Dendritic cell treated with granulocyte-macrophage colony-stimulating factor and Interleukin-4, amounts not matched to agents 40 ng/mL and 50 ng/mL, for 4 days (primary cell): ENCODE measurements at regions of chr22 and their contacts with region 1.

Region 1: DNA sequence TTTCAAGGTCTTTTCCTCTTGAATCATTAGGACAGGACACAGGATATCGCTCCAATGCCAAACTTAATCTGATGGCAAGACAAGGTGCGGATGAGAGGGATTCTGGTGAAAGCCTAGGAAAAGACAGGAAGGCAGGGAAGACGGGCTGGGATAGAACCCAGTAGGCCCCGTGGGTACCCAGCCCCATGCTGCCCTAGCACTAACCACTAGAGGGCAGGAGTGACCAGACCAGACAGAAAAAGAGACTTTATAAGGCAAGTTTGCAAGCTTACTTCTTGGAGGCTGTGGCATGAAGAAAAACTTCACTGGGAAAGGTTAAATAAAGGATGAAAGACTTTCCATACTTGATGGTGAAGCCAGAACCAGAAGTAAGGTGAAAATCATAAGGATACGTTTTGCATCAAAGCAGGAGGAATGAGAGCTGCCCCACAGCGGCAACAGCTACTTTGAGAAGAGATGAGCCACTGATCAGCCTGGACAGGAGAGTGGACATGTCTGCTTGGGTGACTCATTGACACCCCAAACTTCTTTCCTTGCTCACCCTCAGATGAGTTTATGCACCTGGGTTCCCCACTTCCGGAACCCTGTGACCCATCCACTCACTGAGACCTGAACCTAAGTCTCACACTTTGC is 39.8 kb downstream of the SYN3 start:
- H3K4me3 Mint-ChIP-seq: no peak overlapping the region
- H3K27ac Mint-ChIP-seq: no peak overlapping the region
- H3K4me1 Mint-ChIP-seq: no peaks in the 10 kb centered on the region
- H3K27me3 Mint-ChIP-seq: peaks cover 2% of the 10 kb centered on the region

Region 2: GRCh38 chr22:33209930-33210784 is 191.8 kb after region 1 on chr22:
- intact Hi-C with region 1: loop called (anchors 5 kb)
- H3K4me3 Mint-ChIP-seq: no peak overlapping the region
- H3K27ac Mint-ChIP-seq: no peak overlapping the region
- H3K4me1 Mint-ChIP-seq: no peaks in the 10 kb centered on the region
- H3K27me3 Mint-ChIP-seq: peaks cover 1% of the 10 kb centered on the region